AG04449 (cell line): ENCODE measurements at regions of chr11 and their contacts with region 1.

Region 1: GRCh38 chr11:2151500-2152257 is 9.3 kb downstream of the INS start:
- DNase-seq: no peak
- H3K4me3 ChIP-seq: no peak overlapping the region
- CTCF ChIP-seq: peak; percentile 80

Region 2: DNA sequence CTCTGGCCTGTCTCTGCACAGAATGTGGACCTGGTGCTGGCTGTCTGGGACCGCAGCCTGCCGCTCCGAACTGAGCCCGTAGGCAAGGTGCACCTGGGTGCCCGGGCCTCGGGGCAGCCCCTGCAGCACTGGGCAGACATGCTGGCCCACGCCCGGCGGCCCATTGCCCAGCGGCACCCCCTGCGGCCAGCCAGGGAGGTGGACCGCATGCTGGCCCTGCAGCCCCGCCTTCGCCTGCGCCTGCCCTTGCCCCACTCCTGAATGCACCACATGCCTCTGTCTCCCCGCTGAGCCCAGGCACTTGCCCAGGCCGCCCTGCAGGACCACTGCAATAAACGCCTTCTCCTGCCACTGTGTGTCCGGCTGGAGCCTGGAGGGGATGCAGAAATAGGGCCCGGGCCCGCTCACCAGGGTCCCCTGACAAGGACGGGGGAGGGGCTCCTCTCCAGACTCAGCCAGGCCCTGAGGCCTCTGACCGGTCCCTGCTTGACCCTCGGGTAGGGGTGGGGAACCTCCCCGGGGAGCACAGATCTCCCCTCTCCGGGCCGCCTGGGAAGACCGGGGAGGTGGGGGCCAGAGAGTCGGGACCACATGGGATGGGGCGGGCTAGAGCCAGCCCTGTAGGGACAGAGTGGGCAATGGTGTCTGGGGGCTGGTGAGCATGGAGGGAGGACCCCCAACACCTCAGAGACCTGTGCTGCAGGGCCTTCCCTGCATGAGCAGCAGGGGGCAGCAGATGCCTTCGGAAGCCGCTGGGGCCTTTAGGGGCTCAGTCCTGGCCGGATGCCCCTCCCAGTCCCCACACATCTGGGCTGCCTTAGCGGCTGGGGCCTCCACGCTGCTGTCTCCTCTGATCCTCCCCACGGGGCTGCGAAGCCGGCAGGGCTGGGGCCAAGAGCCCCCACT is 314.3 kb before region 1 on chr11:
- CTCF ChIA-PET with region 1: interaction called, 188 read pairs
- POLR2A ChIA-PET with region 1: no interaction called
- DNase-seq: no peak
- H3K4me3 ChIP-seq: no peak overlapping the region
- CTCF ChIP-seq: peak; percentile 97

Region 3: GRCh38 chr11:1946812-1947484 is 204.7 kb before region 1 on chr11 and contains the start of gene MRPL23:
- CTCF ChIA-PET with region 1: interaction called, 110 read pairs
- POLR2A ChIA-PET with region 1: no interaction called
- DNase-seq: no peak
- H3K4me3 ChIP-seq: no peak within 1 kb of the TSS
- CTCF ChIP-seq: no peak

Region 4: DNA sequence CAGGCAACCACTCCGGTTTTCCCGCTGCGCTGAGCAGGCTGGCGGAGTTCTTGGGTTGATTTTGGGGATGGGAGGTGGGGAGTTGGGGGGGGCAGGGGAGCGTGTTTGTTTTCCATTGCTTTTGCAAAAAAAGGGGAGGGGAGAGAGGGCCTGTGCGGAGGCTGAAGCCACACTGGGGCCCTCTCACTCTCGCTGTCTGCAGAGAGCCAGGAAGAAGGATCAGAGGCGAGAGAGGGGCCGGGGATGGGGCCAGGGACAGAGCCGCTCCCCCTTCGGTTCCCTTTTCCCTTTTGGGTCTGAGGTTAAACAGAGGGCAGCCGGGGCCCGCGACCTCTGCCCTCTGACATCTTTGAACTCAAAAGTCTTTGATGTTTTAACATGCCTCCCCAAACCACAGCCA is 136.7 kb before region 1 on chr11:
- CTCF ChIA-PET with region 1: interaction called, 18 read pairs
- POLR2A ChIA-PET with region 1: no interaction called
- DNase-seq: no peak
- H3K4me3 ChIP-seq: no peak overlapping the region
- CTCF ChIP-seq: no peak

Region 5: GRCh38 chr11:2114430-2115241 is 37.0 kb before region 1 on chr11:
- CTCF ChIA-PET with region 1: interaction called, 11 read pairs
- POLR2A ChIA-PET with region 1: interaction called, 3 read pairs
- DNase-seq: no peak
- H3K4me3 ChIP-seq: no peak overlapping the region
- CTCF ChIP-seq: no peak

Region 6: GRCh38 chr11:2390725-2391151 is 239.1 kb after region 1 on chr11:
- CTCF ChIA-PET with region 1: no interaction called
- POLR2A ChIA-PET with region 1: no interaction called
- DNase-seq: no peak
- H3K4me3 ChIP-seq: no peak overlapping the region; the same call in 1 of the 2 replicates
- CTCF ChIP-seq: no peak

Region 7: GRCh38 chr11:2420502-2421225 is 269.0 kb after region 1 on chr11:
- CTCF ChIA-PET with region 1: interaction called, 15 read pairs
- POLR2A ChIA-PET with region 1: no interaction called
- DNase-seq: no peak
- H3K4me3 ChIP-seq: no peak overlapping the region
- CTCF ChIP-seq: peak; percentile 94